A673 (cell line): ENCODE measurements at regions of chr9 and their contacts with region 1.

Region 1: GRCh38 chr9:127224178-127224882 is 40.2 kb upstream of the GARNL3 start:
- DNase-seq: peak; percentile 96
- H3K4me3 ChIP-seq: peak overlapping the region; percentile 53
- H3K27ac ChIP-seq: peak overlapping the region; percentile 85
- H3K4me1 ChIP-seq: peaks cover 10% of the 10 kb centered on the region
- H3K27me3 ChIP-seq: no peaks in the 10 kb centered on the region
- CTCF ChIP-seq: no peak

Region 2: DNA sequence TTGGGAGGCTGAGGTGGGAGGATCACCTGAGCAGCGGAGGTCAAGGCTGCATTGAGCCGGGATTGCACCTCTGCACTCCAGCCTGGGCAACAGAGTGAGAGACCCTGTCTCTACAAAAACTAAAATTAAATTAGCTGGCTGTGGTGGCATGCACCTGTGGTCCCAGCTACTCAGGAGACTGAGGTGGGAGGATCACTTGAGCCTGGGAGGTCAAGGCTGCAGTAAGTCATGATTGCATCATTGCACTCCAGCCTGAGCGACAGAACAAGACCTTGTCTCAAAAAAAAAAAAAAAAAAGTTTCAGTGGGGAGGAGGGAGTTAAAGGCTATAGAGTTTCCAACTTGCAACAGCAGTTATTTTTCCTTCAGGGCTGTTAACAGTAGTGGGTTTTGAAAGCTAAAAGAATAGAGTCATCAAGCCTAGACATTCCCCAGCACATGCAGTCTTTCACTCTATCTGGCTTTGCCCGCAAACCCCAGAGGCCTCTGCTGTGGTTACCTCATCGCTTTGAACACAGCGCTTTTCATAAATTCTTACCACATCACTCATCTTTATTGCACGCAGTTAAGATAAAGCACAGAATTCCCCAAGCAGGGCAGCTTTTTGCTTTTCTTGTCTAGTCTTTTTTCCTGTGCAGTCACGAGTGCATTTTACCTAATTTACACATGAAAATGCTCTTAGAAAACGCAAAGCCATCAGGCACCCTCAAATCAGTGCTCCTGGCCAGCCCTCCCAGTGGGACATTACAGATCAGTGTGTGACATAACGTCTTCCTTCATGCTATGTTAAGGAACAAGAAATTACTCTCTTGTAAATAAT is 163.9 kb after region 1 on chr9:
- CTCF ChIA-PET with region 1: no interaction called
- POLR2A ChIA-PET with region 1: no interaction called
- intact Hi-C with region 1: no loop called
- DNase-seq: peak; percentile 71
- H3K4me3 ChIP-seq: no peak overlapping the region
- H3K27ac ChIP-seq: no peak overlapping the region
- H3K4me1 ChIP-seq: peaks cover 5% of the 10 kb centered on the region
- H3K27me3 ChIP-seq: no peaks in the 10 kb centered on the region
- CTCF ChIP-seq: no peak

Region 3: GRCh38 chr9:127451725-127452480 is 227.6 kb after region 1 on chr9:
- CTCF ChIA-PET with region 1: no interaction called
- POLR2A ChIA-PET with region 1: interaction called, 16 read pairs
- intact Hi-C with region 1: no loop called
- DNase-seq: peak; percentile 67
- H3K4me3 ChIP-seq: peak overlapping the region; percentile 84
- H3K27ac ChIP-seq: peak overlapping the region; percentile 96
- H3K4me1 ChIP-seq: peaks cover 14% of the 10 kb centered on the region
- H3K27me3 ChIP-seq: no peaks in the 10 kb centered on the region
- CTCF ChIP-seq: no peak

Region 4: DNA sequence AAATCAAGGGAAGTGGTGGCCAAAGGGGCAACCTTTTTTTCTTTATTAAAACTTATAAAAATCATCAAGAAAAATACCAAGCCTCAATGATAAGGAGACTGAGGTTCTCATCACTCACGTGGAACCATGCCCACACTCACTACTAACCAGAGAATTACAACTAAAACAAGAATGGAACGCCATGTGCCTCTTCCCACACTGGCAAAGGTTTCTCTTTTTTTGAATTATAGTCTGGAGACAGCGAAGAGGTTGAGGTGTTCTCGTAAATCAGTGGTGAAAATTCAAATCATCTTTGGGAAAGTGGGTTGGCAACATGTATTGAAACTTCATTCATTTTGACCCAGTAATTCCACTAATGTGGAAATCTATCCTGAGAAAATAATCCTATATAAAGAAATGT is 597.8 kb after region 1 on chr9:
- CTCF ChIA-PET with region 1: no interaction called
- POLR2A ChIA-PET with region 1: interaction called, 12 read pairs
- intact Hi-C with region 1: no loop called
- DNase-seq: no peak
- H3K4me3 ChIP-seq: no peak overlapping the region
- H3K27ac ChIP-seq: no peak overlapping the region
- H3K4me1 ChIP-seq: no peaks in the 10 kb centered on the region
- H3K27me3 ChIP-seq: no peaks in the 10 kb centered on the region
- CTCF ChIP-seq: no peak